PC-9 (cell line): ENCODE measurements at regions of chr2 and their contacts with region 1.

Region 1: GRCh38 chr2:176789751-176790150 is 422.8 kb upstream of the HNRNPA3 start:
- DNase-seq: no peak
- H3K4me3 ChIP-seq: no peak overlapping the region
- H3K27ac ChIP-seq: no peak overlapping the region
- H3K4me1 ChIP-seq: no peaks in the 10 kb centered on the region
- H3K27me3 ChIP-seq: peaks cover 1% of the 10 kb centered on the region
- CTCF ChIP-seq: no peak

Region 2: DNA sequence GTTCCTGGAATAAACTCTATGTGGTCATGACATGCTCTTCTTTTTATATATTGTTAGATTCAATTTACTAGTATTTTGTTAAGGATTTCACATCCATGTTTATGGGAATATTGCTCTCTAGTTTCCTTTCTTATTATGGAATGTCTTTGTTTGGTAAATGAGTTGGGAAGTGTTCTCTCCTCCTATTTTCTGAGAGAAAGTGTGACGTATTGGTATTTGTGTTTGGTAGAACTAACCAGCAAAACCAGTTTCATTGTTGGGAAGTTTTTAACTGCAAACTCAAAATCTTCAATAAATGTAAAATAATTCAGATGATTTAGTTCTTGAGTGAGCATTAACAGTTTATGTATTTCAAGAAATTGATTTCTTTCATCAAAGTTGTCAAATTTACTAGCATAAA is 776.3 kb before region 1 on chr2:
- CTCF ChIA-PET with region 1: no interaction called
- POLR2A ChIA-PET with region 1: interaction called, 11 read pairs
- intact Hi-C with region 1: no loop called
- DNase-seq: no peak
- H3K4me3 ChIP-seq: no peak overlapping the region
- H3K27ac ChIP-seq: no peak overlapping the region
- H3K4me1 ChIP-seq: no peaks in the 10 kb centered on the region
- H3K27me3 ChIP-seq: no peaks in the 10 kb centered on the region
- CTCF ChIP-seq: no peak

Region 3: DNA sequence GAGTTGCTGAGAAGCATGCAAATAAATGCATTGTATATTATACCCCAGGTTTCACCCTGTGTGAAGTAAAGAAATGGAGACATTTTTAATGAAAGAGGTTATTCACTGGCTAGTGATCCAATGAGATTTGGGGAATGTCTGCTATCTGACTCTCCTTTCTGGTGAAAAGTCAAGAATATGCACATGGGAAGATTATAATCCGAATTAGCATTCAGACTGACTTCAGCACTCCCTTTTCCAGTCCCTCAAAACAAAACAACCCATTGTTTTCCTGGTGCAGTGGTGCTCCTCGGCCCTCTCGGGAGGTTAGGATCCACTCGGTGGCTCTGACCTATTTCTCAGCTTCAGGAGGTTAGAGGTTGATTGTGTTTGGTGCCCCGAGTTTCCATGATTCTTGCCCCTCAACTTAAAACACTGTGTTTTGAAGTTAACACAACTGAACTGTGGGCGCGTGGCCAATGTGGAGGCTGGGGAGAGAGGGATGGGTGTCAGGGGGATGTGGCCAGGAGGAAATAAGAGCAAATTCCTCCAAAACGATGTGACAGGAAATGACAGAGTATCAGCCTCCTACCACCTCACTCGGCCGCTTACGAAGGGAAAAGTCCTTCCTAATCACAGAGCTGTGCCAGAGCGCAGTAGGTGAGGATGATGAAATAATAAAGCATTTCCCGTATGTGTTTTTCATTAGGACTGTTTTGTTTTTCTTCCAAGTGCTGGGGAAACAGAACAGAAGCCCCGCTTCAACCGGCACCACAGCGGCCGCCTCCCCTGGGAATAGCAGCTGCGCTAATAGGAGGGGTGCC is 80.4 kb before region 1 on chr2:
- CTCF ChIA-PET with region 1: no interaction called
- POLR2A ChIA-PET with region 1: no interaction called
- intact Hi-C with region 1: no loop called
- DNase-seq: no peak
- H3K4me3 ChIP-seq: no peak overlapping the region
- H3K27ac ChIP-seq: no peak overlapping the region
- H3K4me1 ChIP-seq: no peaks in the 10 kb centered on the region
- H3K27me3 ChIP-seq: peaks cover 43% of the 10 kb centered on the region
- CTCF ChIP-seq: no peak

Region 4: DNA sequence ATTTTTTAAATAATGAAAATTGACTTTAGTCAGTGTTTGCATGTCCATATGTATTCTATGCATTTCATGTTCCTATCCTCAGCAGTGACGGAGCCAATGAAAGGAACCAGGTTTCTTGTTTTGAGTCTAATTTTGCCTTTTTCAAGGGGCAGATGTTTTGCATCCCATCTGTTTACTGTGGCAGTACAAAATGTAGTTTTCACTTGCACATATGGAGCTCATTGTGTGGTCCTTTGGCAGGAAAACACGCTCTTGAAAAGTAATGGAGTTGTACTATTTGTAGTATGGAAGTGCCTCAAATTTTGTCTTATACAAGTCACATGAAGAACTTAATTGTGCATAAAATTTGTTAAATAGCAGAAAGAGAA is 730.6 kb after region 1 on chr2:
- CTCF ChIA-PET with region 1: no interaction called
- POLR2A ChIA-PET with region 1: no interaction called
- intact Hi-C with region 1: no loop called
- DNase-seq: no peak
- H3K4me3 ChIP-seq: no peak overlapping the region
- H3K27ac ChIP-seq: no peak overlapping the region
- H3K4me1 ChIP-seq: no peaks in the 10 kb centered on the region
- H3K27me3 ChIP-seq: no peaks in the 10 kb centered on the region
- CTCF ChIP-seq: no peak